WTC11 (cell line): ENCODE measurements at regions of chr6 and their contacts with region 1.

Region 1: DNA sequence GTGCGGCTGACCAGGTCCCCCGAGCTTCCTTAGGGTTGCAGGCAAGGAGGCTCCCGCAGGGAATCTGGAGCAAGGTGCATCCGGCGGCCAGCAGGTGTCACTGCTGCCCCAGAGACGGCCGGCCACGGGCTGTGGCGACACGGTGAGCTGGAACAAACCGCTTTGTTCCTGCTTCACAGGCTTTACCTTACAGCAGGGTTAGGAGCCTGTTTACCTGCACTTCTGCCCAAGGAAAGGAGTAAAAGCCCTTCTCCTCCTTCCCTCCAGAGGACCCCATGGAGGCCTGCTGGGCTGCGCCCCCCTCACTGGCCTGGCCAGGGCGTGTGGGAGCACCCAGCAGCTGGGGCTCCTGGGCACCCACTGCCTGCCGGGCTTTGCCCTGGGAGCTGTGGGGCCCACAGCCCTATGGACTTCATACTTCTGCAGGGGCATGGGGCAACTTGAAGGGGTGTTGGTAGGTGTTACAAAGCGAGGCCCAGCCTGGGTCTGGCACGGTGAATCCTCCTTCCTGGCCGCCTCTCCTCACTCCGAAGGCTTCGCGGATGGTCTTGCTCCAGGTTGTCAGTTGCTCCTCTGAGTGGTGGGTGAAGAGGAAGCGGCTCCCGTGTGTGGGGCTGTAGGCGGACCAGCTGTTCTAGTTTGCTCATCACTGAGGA is 88.4 kb downstream of the CDC5L start:
- DNase-seq: peak; percentile 92
- ATAC-seq: peak; percentile 83
- H3K4me3 Mint-ChIP-seq: no peak overlapping the region
- H3K27ac Mint-ChIP-seq: no peak overlapping the region
- H3K4me1 Mint-ChIP-seq: peaks cover 41% of the 10 kb centered on the region
- H3K27me3 Mint-ChIP-seq: peaks cover 2% of the 10 kb centered on the region; the same call in 1 of the 2 replicates
- CTCF ChIP-seq: peak; percentile 89

Region 2: DNA sequence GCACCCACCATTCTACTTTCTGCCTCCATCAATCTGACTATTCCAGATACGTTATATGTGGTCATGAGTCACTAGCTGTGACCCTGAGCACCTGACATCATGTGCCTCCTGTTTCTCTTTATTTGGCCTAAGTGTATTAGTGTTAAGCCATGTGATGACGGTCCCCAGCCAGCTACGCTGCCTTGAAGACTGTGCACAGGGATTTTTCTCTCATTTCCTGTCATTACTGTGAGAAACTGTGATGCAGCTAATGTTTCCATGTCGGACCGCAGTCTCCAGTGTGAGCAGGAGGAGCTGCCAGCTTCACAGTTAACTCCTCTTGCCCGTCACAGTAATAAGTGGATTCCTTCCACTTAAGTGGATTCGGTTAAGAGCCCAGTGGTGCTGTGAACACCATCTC is 143.3 kb before region 1 on chr6:
- CTCF ChIA-PET with region 1: no interaction called
- POLR2A ChIA-PET with region 1: no interaction called
- DNase-seq: no peak
- ATAC-seq: no peak
- H3K4me3 Mint-ChIP-seq: no peak overlapping the region
- H3K27ac Mint-ChIP-seq: no peak overlapping the region
- H3K4me1 Mint-ChIP-seq: peaks cover 33% of the 10 kb centered on the region
- H3K27me3 Mint-ChIP-seq: peaks cover 8% of the 10 kb centered on the region
- CTCF ChIP-seq: no peak

Region 3: GRCh38 chr6:44439270-44440045 is 36.4 kb before region 1 on chr6:
- CTCF ChIA-PET with region 1: no interaction called
- POLR2A ChIA-PET with region 1: no interaction called
- DNase-seq: no peak
- ATAC-seq: no peak
- H3K4me3 Mint-ChIP-seq: no peak overlapping the region
- H3K27ac Mint-ChIP-seq: no peak overlapping the region
- H3K4me1 Mint-ChIP-seq: no peaks in the 10 kb centered on the region
- H3K27me3 Mint-ChIP-seq: no peaks in the 10 kb centered on the region
- CTCF ChIP-seq: no peak

Region 4: DNA sequence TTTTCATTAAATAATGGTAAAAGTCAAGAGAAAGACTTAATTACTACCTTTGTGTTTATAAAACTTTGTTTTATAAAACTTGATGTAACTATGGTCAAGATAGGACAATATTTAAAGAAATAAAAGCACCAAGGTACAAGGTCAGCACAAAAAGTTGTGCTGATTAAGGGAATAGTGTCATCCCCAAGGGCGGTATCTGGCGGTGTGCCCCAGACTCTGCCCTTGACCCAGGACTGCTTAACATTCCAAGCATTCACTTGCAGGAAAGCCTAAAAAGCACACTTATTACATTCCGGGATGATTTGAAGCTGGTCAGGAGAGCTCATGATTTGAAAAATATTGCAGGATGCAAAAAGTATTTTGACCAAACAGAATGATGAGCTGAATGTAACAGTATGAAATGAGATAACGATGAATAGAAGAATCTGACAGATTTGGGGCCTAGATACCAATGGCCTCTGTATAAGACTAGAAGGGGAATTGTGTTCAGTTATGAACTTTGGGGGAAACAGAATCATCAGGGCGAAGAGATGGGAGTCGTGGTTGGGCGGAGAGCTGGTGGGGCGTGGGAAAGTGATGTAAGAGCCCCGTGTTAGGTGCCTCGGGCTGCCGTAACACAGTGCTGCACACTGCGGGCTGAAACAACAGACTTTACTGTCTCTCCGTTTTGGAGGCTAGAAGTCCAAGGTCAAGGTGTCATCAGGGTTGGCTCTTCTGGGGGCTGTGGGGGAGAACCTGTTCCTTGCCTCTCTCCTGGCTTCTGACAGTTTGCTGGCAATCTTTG is 11.2 kb before region 1 on chr6:
- CTCF ChIA-PET with region 1: interaction called, 22 read pairs
- POLR2A ChIA-PET with region 1: no interaction called
- DNase-seq: no peak
- ATAC-seq: peak; percentile 73
- H3K4me3 Mint-ChIP-seq: no peak overlapping the region
- H3K27ac Mint-ChIP-seq: no peak overlapping the region
- H3K4me1 Mint-ChIP-seq: peaks cover 5% of the 10 kb centered on the region
- H3K27me3 Mint-ChIP-seq: no peaks in the 10 kb centered on the region; the same call in 1 of the 2 replicates
- CTCF ChIP-seq: no peak

Region 5: DNA sequence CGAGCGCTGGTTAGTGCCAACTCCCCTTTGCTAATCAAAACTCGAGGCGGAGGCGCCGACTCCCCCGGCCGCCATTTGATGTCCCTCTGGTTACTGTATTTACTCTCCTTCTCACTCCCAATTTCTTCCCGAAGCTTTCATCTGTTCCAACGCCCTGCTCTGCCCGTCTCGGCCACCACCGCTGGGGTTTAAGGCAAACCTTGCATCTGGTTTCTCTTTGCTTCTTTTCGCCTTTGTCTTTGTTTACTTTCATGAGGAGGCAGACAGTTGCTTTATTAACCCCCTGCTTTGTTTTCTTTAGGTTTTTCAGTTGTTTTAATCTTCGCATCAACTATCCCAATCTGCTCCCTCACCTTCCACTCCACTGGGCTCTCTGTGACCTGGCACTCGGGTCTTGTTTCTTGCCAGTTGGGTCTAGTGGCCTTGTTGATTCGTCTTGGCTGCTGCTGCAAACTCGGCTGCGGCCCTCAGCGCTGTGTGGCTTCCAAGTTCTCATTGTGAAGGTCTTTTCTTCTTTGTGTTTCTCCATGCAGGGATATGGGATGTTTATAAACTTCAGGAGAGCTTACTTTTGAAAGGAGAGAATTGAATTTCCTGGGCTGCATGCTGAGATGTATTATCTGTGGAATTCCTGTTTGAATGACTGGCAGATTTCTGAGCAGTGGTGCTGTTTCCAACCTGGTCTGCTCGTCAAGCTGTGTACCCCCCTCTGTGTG is 66.7 kb after region 1 on chr6:
- CTCF ChIA-PET with region 1: interaction called, 29 read pairs
- POLR2A ChIA-PET with region 1: no interaction called
- DNase-seq: peak; percentile 24
- ATAC-seq: peak; percentile 90
- H3K4me3 Mint-ChIP-seq: peak overlapping the region; percentile 7
- H3K27ac Mint-ChIP-seq: peak overlapping the region; percentile 91
- H3K4me1 Mint-ChIP-seq: peaks cover 28% of the 10 kb centered on the region
- H3K27me3 Mint-ChIP-seq: no peaks in the 10 kb centered on the region
- CTCF ChIP-seq: no peak

Region 6: DNA sequence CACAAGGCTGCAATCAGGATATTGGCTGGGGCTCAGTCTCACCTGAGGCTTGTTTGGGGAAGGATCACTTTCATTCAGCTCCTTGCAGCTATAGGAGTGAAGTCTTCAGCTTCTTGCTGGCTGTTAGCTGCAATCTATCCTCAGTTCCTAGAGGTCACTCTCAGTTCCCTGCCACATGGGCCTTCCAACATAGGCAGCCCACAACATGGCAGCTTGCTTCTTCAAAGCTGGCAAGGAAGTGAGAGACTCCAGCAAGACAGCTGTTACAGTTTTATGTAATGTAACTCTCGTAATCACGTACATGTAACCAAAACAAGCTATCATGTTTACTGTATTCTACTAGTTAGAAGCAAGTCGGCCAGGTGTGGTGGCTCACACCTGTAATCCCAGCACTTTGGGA is 138.5 kb after region 1 on chr6:
- CTCF ChIA-PET with region 1: interaction called, 25 read pairs
- POLR2A ChIA-PET with region 1: no interaction called
- DNase-seq: no peak
- ATAC-seq: no peak
- H3K4me3 Mint-ChIP-seq: no peak overlapping the region
- H3K27ac Mint-ChIP-seq: no peak overlapping the region
- H3K4me1 Mint-ChIP-seq: 0 out of 2 replicates have a peak, but pooled peaks cover 1% of the 10 kb centered on the region
- H3K27me3 Mint-ChIP-seq: no peaks in the 10 kb centered on the region; the same call in none of the 2 replicates
- CTCF ChIP-seq: no peak

Region 7: DNA sequence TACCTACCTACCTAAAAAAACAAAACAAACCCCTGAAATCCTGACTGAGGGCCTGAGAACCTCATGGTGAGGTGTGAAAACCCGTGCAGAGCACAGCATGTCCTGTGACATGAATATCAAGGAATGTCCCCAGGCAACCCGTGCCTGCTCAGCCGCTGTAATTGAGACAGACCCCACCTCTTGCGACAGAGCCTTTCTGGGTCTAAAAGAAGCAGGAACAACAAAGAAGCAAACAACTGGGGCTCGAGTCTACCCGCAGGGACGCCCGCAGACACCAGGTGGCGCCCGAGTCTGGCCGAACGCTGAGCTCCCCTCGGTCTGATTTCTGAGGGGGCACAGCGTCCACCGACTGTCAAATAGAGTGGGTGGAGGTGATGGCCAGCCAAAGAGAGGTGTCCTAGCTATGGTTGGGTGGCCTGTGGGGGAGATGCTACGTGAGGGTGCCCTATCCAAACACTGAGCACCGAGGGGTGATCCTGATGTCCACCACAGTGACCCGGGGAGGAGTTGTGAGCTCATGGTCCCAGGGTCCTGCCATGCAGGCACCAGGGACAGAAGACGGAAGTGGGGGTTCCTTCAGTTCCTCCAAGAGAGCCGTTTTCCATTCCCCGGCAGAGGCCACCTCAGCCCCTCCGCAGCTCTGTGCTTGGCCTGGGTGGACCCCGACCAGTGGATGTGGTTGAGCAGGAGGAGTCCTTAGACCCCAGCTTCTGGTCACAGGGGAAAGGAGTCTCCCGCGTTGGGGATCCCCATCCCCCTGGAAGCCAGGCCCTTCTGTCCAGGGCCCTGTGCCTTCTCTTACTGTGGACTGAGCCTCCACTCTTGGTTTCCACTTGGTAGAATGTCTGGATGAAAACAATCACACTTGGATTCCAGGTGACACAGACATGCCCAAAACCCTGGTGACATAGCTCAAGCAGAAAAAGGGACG is 179.8 kb after region 1 on chr6:
- CTCF ChIA-PET with region 1: interaction called, 97 read pairs
- POLR2A ChIA-PET with region 1: no interaction called
- DNase-seq: peak; percentile 91
- ATAC-seq: peak; percentile 88
- H3K4me3 Mint-ChIP-seq: no peak overlapping the region
- H3K27ac Mint-ChIP-seq: peak overlapping the region; percentile 40
- H3K4me1 Mint-ChIP-seq: peaks cover 33% of the 10 kb centered on the region
- H3K27me3 Mint-ChIP-seq: no peaks in the 10 kb centered on the region; the same call in 1 of the 2 replicates
- CTCF ChIP-seq: peak; percentile 93

Region 8: DNA sequence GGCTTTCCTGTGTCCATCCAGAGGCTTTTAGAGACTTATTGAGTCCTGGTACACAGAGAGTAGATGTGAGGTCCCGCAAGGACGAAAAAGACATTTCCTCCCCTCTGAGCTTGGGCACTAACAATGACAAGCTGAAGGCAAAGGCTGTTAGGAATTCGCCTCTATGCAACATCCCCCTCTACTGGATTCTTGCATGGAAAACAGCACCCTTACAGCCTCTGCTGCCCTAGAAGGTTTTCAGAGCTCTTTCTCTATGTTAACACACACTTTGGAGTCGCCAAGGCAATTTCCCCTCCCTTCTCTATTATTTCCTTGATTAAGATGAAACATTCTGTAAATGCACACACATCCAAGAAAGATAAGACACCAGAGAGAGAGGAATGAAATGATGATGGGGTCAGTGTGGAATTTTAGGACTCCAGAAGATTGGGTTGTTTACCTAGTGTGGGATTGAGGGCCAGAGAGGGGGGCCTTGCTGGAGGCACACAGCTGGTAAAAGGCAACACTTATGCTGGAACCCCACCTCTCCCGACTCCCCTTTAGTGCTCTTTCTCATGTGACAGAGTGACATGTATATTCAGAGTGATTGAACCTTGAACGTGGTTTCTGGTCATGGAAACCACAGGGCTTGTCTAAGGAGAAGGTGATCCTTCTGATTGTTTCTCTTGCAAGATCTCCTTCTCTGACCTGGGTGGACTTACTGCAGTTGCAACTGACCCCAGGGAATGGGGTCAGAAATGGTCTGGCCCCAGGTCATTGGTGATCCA is 1239.0 kb after region 1 on chr6:
- CTCF ChIA-PET with region 1: interaction called, 22 read pairs
- POLR2A ChIA-PET with region 1: interaction called, 3 read pairs
- DNase-seq: peak; percentile 50
- ATAC-seq: peak; percentile 97
- H3K4me3 Mint-ChIP-seq: no peak overlapping the region
- H3K27ac Mint-ChIP-seq: no peak overlapping the region
- H3K4me1 Mint-ChIP-seq: peaks cover 6% of the 10 kb centered on the region
- H3K27me3 Mint-ChIP-seq: no peaks in the 10 kb centered on the region
- CTCF ChIP-seq: 0 out of 2 replicates have a peak, but pooled peaks have one; percentile 29